ENCODE measurements at regions of chr21 and their contacts with region 1.

Region 1: DNA sequence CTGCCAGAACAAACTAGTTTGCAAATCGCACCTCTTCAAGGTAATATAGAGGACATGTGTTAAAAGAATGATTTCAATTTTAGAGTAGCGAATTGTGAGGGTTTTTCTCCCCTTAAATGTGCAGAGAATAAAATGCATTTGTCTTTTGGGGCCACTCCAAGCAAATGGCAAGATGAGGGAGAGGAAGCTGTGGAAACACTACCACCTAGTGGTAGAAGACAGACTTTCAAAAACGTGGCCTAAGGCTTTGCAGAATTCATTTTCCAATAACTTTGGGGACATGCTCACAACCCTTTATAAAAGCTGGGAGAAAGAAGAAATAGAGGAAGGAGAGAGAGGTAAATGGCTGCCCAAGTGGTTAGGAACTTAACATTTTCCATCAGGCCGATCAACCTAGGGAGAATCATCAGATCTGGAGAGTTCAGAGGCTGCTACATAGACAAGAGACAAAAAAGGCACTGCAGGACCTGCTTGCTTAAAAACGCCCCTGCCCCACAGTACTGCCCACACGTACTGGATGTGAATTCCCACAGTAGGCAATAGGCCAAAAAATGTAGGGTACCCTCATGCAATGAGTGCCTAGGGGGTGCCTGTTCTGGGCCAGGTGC is 15.7 kb upstream of the RCAN1 start:
- DNase-seq: peak; percentile 42
- H3K4me3 ChIP-seq: no peak overlapping the region
- H3K27ac ChIP-seq: no peak overlapping the region
- H3K4me1 ChIP-seq: no peaks in the 10 kb centered on the region
- H3K27me3 ChIP-seq: peaks cover 5% of the 10 kb centered on the region
- CTCF ChIP-seq: peak; percentile 71 to 81

Region 2: GRCh38 chr21:34362136-34362444 is 268.6 kb before region 1 on chr21:
- CTCF ChIA-PET with region 1: no interaction called
- dilution Hi-C with region 1: no loop called
- in situ Hi-C with region 1: no loop called
- intact Hi-C with region 1: loop called (anchors 1 kb)
- DNase-seq: no peak
- H3K4me3 ChIP-seq: no peak overlapping the region
- H3K27ac ChIP-seq: no peak overlapping the region
- H3K4me1 ChIP-seq: peaks cover 2% of the 10 kb centered on the region
- H3K27me3 ChIP-seq: no peaks in the 10 kb centered on the region
- CTCF ChIP-seq: no peak

Region 3: DNA sequence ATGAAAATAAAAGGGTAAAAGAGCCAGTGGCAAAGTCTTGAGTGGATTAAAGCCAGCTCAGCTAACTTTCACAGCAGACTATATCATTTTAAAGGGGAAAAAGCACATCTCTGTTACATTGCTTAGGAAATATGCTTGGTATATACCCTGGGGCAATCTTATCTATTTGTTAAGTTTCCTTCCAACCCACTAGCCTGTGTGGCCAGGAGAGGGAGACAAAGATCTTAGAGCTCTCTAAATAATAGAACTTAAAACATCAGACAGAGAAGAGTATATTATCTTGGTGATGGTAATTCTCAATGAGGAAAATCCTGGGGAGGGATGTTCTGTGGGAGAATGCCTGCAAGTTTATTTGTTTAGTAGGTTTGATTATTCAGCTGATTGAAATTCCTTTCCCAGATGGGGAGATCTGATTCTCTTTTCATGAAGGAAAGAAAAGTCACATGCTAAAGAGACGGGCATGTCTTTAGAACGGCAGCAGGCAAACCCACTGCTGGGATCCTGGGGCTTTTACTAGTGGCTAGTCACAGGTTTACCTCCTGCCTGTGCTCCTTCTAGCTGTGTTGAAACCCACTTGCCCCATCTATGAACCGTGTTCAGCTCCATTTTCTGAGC is 263.2 kb before region 1 on chr21:
- CTCF ChIA-PET with region 1: no interaction called
- dilution Hi-C with region 1: no loop called
- in situ Hi-C with region 1: no loop called
- intact Hi-C with region 1: loop called (anchors 1 kb)
- DNase-seq: peak; percentile 72
- H3K4me3 ChIP-seq: no peak overlapping the region
- H3K27ac ChIP-seq: no peak overlapping the region
- H3K4me1 ChIP-seq: peaks cover 4% of the 10 kb centered on the region
- H3K27me3 ChIP-seq: no peaks in the 10 kb centered on the region
- CTCF ChIP-seq: peak; percentile 84 to 91

Region 4: DNA sequence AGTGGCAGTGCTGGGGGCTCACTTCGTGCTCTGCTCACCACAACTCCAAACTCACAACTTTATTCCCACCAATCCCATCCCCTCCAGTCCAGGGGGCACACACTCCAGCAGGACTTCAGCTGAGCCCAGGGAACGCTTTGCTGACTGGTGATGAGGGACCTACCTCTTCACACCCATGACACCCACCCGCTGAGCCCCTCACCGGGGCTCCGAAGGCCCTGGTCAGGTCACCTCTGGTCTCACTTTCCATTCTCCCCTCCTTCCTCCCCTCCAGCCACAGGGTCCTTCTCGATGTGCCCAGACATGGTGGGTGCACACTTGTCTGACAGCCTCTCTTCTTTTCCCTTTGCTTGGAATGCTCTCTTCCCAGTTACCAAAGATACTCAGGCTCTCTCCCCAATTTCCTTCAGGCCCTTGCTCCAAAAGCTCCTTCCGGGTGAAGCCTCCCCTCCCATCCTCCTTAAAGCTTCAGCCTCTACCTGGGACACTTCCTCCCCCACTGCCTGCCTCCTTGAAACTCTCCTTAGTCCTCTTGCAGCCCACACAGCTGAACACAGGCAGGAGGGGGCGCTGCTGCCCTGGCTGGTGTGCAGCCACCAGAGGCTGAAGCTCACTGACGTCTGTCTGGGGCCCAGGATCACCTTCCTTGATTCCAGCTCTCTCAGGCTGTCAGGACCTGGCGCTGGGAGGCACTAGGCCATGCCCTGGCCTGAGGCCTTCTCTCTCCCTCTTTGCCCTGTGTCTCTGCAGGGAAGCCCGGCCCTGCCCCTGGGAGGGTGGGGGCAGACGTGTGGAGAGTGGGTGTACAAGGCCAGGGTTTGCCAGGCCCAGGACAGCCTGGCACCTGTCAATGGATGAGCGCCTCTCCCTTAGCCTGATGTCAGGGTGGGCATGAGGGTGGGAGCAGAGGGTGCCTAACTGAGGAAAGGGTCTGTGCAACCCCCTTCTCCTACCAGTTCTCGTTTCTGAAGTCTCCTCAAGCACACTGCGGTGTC is 120.2 kb before region 1 on chr21:
- CTCF ChIA-PET with region 1: no interaction called
- dilution Hi-C with region 1: no loop called
- in situ Hi-C with region 1: no loop called
- intact Hi-C with region 1: loop called (anchors 1 kb)
- DNase-seq: peak; percentile 39
- H3K4me3 ChIP-seq: no peak overlapping the region
- H3K27ac ChIP-seq: no peak overlapping the region
- H3K4me1 ChIP-seq: no peaks in the 10 kb centered on the region
- H3K27me3 ChIP-seq: no peaks in the 10 kb centered on the region
- CTCF ChIP-seq: peak; percentile 75 to 90

Region 5: GRCh38 chr21:34595457-34595856 is 35.2 kb before region 1 on chr21:
- CTCF ChIA-PET with region 1: no interaction called
- dilution Hi-C with region 1: no loop called
- in situ Hi-C with region 1: no loop called
- intact Hi-C with region 1: no loop called
- DNase-seq: no peak
- H3K4me3 ChIP-seq: no peak overlapping the region
- H3K27ac ChIP-seq: no peak overlapping the region
- H3K4me1 ChIP-seq: peaks cover 8% of the 10 kb centered on the region
- H3K27me3 ChIP-seq: no peaks in the 10 kb centered on the region
- CTCF ChIP-seq: no peak

Measured in mammary epithelial cell (primary cell).